ENCODE measurements at regions of chr6 and their contacts with region 1.

Region 1: DNA sequence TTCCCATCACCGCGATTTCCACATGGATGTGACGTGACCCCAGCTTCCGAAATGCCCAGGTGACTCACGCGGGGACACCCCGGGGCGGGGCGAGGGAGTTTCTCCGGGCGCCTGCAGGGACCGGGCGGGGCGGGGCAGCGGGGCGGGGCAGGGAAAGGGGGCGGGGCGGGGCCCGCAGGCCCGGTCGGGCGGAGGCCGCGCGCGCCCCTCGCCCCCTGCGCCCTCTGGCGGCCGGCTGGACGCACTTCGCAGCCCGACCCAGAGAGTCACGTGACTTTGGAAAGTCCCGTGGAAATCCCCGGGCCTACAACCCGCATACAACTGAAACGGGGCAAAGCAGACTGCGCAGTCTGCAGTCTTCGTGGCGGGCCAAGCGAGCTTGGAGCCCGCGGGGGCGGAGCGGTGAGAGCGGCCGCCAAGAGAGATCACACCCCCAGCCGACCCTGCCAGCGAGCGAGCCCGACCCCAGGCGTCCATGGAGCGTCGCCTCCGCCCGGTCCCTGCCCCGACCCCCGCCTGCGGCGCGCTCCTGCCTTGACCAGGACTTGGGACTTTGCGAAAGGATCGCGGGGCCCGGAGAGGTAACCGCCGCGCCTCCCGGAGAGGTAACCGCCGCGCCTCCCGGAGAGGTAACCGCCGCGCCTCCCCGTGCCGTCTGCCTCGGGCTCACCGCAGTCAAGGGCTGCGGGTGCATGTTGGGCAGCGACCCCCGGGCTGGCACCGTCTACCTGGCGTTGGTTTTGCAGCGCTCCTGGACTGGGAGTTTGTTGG is at the start of gene TNFAIP3:
- DNase-seq: peak; percentile 49
- H3K4me3 ChIP-seq: peak within 1 kb of the TSS; percentile 86
- H3K27me3 ChIP-seq: no peaks in the 10 kb centered on the region
- CTCF ChIP-seq: peak; percentile 66
- polyA plus RNA-seq, gene TNFAIP3: 5.7 and 6.3 TPM in 2 replicates

Region 2: DNA sequence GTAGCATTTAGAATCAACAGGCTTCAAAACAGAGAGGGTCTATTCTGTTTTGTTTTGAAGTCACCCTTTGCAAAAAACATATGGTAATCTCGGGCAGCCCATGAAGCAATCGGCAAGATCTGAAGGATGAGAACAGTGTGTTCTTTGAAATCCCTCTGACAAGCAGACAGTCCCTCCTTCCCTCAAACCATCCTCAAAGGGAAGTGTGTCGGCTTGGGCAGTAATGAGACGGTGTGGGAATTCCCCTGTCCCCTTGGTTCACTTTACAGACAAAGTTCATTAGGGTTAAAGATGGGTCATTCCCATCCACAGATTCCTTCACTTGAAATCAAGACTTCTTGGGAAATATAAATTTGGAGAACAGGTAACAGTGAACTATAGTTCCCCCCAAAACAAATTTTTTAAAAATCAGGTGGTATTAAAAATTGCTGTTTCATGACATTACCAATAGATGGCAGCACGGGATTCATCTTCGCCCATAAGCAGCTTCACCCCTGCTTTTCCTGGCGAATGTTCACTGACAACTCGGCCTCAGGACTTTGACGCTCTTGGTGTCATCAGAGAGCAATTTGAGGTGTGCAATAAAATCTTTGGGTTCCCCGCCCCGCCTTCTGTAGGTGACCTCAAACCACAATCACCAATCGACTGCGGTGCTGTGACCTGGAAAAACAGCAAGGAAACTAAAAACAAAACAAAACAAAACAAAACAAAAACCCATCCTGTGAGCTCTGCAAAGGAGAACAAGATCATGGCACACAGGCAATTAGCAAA is 159.3 kb before region 1 on chr6:
- CTCF ChIA-PET with region 1: interaction called, 26 read pairs
- POLR2A ChIA-PET with region 1: no interaction called
- DNase-seq: no peak
- H3K4me3 ChIP-seq: no peak overlapping the region
- H3K27me3 ChIP-seq: no peaks in the 10 kb centered on the region
- CTCF ChIP-seq: peak; percentile 71

Region 3: GRCh38 chr6:137882225-137882961 is 15.3 kb after region 1 on chr6:
- CTCF ChIA-PET with region 1: interaction called, 12 read pairs
- POLR2A ChIA-PET with region 1: no interaction called
- DNase-seq: no peak
- H3K4me3 ChIP-seq: no peak overlapping the region
- H3K27me3 ChIP-seq: no peaks in the 10 kb centered on the region
- CTCF ChIP-seq: no peak

Region 4: GRCh38 chr6:137938770-137939379 is 71.8 kb after region 1 on chr6:
- CTCF ChIA-PET with region 1: interaction called, 38 read pairs
- POLR2A ChIA-PET with region 1: no interaction called
- DNase-seq: no peak
- H3K4me3 ChIP-seq: no peak overlapping the region
- H3K27me3 ChIP-seq: no peaks in the 10 kb centered on the region
- CTCF ChIP-seq: no peak